ENCODE measurements at regions of chr13 and their contacts with region 1.

Region 1: DNA sequence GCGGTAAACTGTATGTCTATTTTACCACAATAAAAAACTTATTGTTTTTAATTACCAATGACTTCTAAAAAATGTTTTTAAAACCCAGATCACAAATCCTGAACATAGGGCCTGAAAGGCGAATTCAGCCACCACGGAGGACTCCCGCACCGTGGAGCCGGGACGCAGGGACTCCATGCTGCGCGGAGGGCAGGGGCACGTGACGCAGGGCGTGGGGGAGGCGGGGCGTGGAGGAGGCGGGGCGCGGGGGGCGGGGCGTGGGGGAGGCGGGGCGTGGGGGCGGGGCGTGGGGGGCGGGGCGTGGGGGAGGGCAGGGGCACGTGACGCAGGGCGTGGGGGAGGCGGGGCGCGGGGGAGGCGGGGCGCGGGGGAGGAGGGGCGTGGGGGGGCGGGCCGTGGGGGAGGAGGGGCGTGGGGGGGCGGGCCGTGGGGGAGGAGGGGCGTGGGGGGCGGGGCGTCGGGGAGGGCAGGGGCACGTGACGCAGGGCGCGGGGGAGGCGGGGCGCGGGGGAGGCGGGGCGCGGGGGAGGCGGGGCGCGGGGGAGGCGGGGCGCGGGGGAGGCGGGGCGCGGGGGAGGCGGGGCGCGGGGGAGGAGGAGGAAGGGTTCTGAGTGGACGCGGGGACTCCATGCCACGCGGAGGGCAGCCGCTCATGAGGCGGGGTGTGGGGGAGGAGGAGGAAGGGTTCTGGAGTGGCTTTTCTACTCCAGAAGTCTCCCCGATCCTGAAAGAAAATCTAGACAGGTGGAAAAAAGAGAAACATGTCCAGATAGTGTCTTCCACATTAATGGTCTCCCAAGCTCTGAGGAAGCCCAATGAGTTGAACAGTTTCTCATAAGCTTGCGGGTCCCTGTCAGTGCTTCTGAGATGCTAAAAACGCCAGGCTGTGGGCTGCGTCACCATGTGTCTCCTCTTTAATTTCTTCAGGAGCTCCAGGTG is 4.4 kb upstream of the PROZ start:
- DNase-seq: peak; percentile 94
- H3K4me3 ChIP-seq: peak overlapping the region; percentile 24 to 52 (median 44)
- H3K27ac ChIP-seq: peak overlapping the region; percentile 74 to 79 (median 78)
- H3K4me1 ChIP-seq: peaks cover 0 to 24% (median 16%) of the 10 kb centered on the region in 4 donors
- H3K27me3 ChIP-seq: no peaks in the 10 kb centered on the region
- CTCF ChIP-seq: no peak
- EP300 ChIP-seq: no peak
- POLR2A ChIP-seq: peak; percentile 64 to 66

Region 2: GRCh38 chr13:112689303-112690165 is 464.5 kb before region 1 on chr13 and contains the start of gene ATP11A:
- intact Hi-C with region 1: loop called (anchors 10 kb)
- DNase-seq: peak; percentile 97
- H3K4me3 ChIP-seq: peak within 1 kb of the TSS; percentile 77 to 99 (median 88)
- H3K27ac ChIP-seq: peak within 1 kb of the TSS; percentile 87 to 95 (median 94)
- H3K4me1 ChIP-seq: peaks cover 0 to 48% (median 33%) of the 10 kb centered on the region in 4 donors
- H3K27me3 ChIP-seq: no peaks in the 10 kb centered on the region
- CTCF ChIP-seq: no peak
- EP300 ChIP-seq: no peak
- POLR2A ChIP-seq: peak in 1 of 2 donors; percentile 14
- total RNA-seq, gene ATP11A: 9.6 to 22.9 (median 15.9) TPM

Region 3: GRCh38 chr13:112942689-112943308 is 211.3 kb before region 1 on chr13:
- intact Hi-C with region 1: loop called (anchors 5 kb)
- DNase-seq: peak; percentile 96
- H3K4me3 ChIP-seq: peak overlapping the region in 3 of 4 donors; percentile 47 to 68 (median 54)
- H3K27ac ChIP-seq: peak overlapping the region; percentile 21 to 70 (median 43)
- H3K4me1 ChIP-seq: peaks cover 0 to 18% (median 12%) of the 10 kb centered on the region in 4 donors
- H3K27me3 ChIP-seq: no peaks in the 10 kb centered on the region
- CTCF ChIP-seq: peak; percentile 74 to 91 (median 86)
- EP300 ChIP-seq: no peak
- POLR2A ChIP-seq: no peak

Region 4: DNA sequence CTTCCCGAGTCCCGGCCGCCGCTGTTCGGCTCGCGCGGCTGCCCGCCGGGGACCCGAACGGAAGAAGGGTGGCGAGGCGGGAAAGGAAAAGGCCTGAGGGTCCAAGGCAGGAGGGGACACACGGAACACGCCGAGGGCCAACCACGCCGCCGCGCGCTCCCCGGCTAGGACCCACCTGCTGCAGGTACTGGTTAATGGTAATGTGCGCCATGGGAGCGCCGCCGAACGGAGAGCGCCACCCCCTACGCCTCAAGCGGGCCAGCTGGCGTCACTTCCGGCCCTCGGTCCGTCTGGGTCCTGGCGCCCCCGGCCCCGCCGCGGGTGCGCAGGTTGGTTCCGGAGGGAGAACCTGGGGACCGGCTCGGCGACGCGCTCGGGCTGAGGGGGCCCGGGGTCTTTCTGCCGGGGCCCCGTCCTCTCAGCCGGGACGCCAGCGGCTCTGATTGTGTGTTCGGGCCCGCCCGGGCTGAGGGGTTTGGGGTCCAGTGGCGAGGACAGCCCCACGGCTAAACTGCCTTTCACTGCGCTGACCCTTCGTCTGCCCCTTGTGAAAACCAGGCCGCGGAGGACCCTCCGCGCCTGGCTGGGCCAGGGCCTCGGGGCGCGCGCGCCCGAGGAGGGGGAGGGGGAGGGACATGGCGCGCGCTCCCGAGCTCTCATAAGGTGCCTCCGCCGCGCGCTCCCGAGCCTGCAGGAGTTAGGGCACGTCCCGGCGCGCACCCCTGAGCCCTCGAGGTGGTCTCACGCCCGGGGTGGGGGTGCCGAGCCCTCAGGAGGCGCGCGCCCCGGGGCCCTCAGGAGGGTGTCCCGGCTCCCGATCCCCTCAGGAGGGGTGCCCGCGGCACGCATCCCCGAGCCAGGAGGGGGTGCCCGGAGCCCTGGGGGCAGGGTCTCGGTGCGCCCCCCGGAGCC is 54.6 kb after region 1 on chr13 and contains the start of gene PCID2:
- intact Hi-C with region 1: loop called (anchors 2 kb)
- DNase-seq: peak; percentile 95
- H3K4me3 ChIP-seq: peak within 1 kb of the TSS; percentile 64 to 97 (median 86)
- H3K27ac ChIP-seq: peak within 1 kb of the TSS; percentile 94 to 100 (median 100)
- H3K4me1 ChIP-seq: peaks cover 0 to 79% (median 65%) of the 10 kb centered on the region in 4 donors
- H3K27me3 ChIP-seq: no peaks in the 10 kb centered on the region
- CTCF ChIP-seq: no peak
- EP300 ChIP-seq: peak in 2 of 4 donors; percentile 43 to 65
- POLR2A ChIP-seq: peak; percentile 71 to 81
- total RNA-seq, gene PCID2: 44.1 to 70.9 (median 54.8) TPM

Region 5: DNA sequence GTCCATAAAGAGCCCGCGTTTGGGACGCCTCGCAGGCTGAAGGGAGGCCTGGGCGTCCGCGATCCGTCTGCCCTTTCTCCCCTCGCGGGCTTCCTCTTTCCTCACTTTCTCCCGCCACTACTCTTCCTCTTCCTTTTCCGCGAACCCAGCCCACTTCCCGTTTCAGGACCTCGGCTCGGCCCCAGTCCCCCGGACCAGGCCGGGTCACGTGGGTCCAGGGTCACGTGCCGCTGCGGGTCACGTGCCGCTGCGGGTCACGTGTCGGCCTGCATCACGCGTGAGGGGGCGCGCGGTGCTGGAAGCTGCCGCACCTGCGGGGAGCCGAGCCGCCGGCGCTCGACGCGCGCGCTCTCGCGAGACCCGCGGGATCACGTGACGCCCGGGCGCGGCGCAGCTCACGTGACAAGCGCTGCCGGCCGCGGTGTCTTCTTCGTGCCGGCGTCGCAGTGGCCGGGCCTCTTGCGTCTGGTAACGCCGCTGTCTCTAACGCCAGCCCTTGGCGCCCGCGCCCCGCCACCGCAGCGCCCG is 142.8 kb after region 1 on chr13 and contains the start of gene LAMP1:
- intact Hi-C with region 1: loop called (anchors 1 kb)
- DNase-seq: peak; percentile 99
- H3K4me3 ChIP-seq: peak within 1 kb of the TSS; percentile 78 to 100 (median 94)
- H3K27ac ChIP-seq: peak within 1 kb of the TSS; percentile 79 to 90 (median 88)
- H3K4me1 ChIP-seq: peaks cover 0 to 32% (median 26%) of the 10 kb centered on the region in 4 donors
- H3K27me3 ChIP-seq: no peaks in the 10 kb centered on the region
- CTCF ChIP-seq: no peak
- EP300 ChIP-seq: peak in 3 of 4 donors; percentile 11 to 79 (median 66)
- POLR2A ChIP-seq: peak; percentile 29 to 55
- total RNA-seq, gene LAMP1: 77.3 to 91.0 (median 87.5) TPM

Region 6: DNA sequence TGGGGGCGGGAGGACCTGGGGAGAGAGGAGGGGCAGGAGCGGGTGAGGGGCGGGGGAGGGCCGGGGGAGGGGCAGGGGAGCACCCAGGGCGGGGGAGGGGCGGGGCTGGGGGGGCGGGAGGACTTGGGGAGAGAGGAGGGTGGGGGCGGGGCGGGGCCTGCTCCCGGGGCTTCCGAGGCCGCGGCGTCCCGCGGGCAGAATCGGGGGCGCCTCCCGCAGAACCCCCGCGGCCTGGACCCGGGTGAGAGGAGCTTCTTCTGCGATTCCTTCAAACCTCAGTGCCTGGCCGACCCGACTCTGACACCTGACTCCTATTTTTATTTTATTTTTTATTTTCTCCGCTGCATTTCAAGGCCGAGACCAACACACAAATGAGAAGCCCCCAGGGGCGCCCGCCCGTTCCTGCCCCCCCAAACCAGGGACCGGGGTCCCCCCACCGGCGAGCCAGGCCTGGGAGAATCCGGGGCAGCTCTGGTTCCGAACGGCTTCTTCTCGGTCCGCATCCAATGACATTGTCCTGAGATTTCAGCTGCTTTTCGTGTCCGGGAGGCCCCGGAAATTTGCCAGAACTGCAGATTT is 210.3 kb after region 1 on chr13:
- intact Hi-C with region 1: loop called (anchors 2 kb)
- DNase-seq: peak; percentile 71
- H3K4me3 ChIP-seq: peak overlapping the region; percentile 55 to 92 (median 83)
- H3K27ac ChIP-seq: peak overlapping the region; percentile 74 to 86 (median 80)
- H3K4me1 ChIP-seq: peaks cover 3 to 24% (median 18%) of the 10 kb centered on the region in 4 donors
- H3K27me3 ChIP-seq: no peaks in the 10 kb centered on the region
- CTCF ChIP-seq: no peak
- EP300 ChIP-seq: no peak
- POLR2A ChIP-seq: peak; percentile 60 to 66

Measured in sigmoid colon (tissue), 7 donors.